Activated CD4-positive, alpha-beta memory T cell treated with anti-CD3 and anti-CD28 coated beads, Interleukin-2, amount 10 ng/mL, durations not matched to agents 7 days and 5 days (primary cell): ENCODE measurements at regions of chr1 and their contacts with region 1.

Region 1: DNA sequence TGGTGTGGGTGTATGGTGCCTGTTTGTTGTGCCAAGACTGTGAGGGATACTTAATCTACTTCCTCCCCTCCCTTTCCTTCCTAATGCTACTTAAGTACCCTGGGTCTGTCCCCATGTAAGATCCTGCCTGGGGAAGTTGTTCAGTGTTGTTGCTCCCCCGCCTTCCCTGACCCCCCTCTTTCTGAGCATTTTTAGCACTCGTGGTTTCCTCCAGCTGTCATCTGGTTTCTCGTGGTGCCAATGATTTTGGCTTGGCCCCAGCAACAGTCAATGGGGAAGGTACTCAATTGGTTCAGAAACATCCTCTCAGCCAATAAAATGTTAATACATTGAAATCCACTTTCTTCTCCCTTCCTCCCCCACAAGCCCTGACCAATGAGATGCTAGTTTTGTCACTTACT is 8.0 kb upstream of the B4GALT3 start:
- DNase-seq: peak; percentile 88
- H3K4me3 Mint-ChIP-seq: peak overlapping the region; percentile 71
- H3K27ac Mint-ChIP-seq: peak overlapping the region; percentile 93
- H3K4me1 Mint-ChIP-seq: peaks cover 79% of the 10 kb centered on the region
- H3K27me3 Mint-ChIP-seq: no peaks in the 10 kb centered on the region

Region 2: DNA sequence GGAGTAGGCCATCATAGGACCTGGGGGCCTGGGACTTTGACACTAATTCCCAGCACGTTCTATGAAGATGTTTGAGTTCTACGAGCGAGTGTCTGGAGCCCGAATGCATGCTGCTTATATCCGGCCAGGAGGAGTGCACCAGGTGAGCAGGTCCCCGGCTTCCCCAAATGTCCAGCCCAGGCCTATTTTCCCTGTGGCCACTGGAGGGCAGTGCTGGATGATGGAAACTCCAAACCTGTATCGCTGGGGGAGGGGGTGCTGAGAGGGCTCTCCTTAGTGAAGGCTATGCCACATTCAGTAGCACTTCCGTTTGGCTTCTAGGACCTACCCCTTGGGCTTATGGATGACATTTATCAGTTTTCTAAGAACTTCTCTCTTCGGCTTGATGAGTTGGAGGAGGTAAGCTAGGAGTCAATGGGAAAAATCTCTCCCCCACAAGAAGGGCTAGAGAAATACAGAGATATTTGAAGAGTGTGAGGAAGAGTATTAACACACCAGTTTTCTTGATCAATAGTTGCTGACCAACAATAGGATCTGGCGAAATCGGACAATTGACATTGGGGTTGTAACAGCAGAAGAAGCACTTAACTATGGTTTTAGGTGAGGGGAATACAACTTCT is 24.6 kb after region 1 on chr1:
- CTCF ChIA-PET with region 1: interaction called, 10 read pairs
- POLR2A ChIA-PET with region 1: interaction called, 8 read pairs
- DNase-seq: peak; percentile 75
- H3K4me3 Mint-ChIP-seq: no peak overlapping the region
- H3K27ac Mint-ChIP-seq: peak overlapping the region; percentile 41
- H3K4me1 Mint-ChIP-seq: peaks cover 39% of the 10 kb centered on the region
- H3K27me3 Mint-ChIP-seq: no peaks in the 10 kb centered on the region

Region 3: DNA sequence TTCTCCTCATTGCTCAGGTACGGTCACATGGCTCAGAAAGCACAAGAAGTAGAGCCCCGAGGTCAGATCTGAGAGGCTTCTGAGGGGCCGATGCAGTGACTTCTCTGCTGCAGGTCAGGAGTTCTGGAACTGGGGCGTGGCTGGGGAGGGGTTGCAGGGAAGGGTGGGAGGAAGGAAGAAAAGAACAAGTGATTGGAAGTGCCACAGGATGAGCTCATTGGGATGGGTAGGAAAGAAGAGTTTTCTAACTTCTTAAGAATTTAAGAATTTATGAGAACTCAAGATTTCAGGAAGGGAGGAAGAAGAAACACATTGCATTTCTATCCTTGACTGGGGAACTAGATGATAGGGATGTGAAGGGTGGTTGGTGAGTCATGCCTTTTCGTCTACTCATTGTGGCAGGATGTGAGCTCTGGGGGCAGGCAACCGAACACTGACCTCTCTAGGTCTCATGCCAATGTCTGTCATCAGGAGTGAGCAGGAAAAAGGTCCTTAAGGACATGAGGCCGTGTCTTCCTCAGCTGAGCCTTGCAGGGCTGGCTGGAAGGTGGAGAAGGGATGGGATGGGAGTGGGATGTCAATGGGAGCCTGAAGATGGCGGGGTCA is 536.6 kb after region 1 on chr1:
- CTCF ChIA-PET with region 1: no interaction called
- POLR2A ChIA-PET with region 1: no interaction called
- DNase-seq: peak; percentile 24
- H3K4me3 Mint-ChIP-seq: no peak overlapping the region
- H3K27ac Mint-ChIP-seq: no peak overlapping the region
- H3K4me1 Mint-ChIP-seq: peaks cover 40% of the 10 kb centered on the region
- H3K27me3 Mint-ChIP-seq: peaks cover 45% of the 10 kb centered on the region